GM12878 (cell line): ENCODE measurements at regions of chr13 and their contacts with region 1.

Region 1: DNA sequence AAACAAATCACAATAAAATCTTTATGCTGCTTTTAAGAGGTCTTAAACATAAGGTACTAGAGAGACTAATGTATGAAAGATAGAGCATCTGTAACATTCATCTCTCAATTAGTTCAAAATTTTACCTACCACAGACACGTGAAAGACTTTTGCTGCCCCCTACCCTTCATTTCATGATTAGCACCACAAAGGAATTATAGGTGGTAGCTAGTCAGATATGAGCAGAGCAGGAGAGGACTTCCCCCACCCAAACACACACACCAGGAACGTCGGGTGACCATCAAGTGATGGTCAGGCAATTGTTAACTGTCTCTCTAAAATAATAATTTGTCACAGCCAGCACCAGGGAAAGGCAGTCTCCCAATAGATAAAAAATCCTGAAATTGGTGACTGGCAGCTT is 1531.7 kb upstream of the SPRY2 start:
- DNase-seq: no peak
- ATAC-seq: peak; percentile 85
- H3K4me3 ChIP-seq: no peak overlapping the region
- H3K27ac ChIP-seq: no peak overlapping the region
- H3K4me1 ChIP-seq: no peaks in the 10 kb centered on the region
- H3K27me3 ChIP-seq: no peaks in the 10 kb centered on the region
- CTCF ChIP-seq: peak in 2 of 3 experiments; percentile 29 to 48; a peak in 4 of 6 replicates
- EP300 ChIP-seq: no peak
- POLR2A ChIP-seq: no peak
- RAD21 ChIP-seq: peak; percentile 25; the same call in 1 of the 2 replicates

Region 2: GRCh38 chr13:81487151-81487550 is 385.4 kb before region 1 on chr13:
- CTCF ChIA-PET with region 1: interaction called, 12 read pairs
- POLR2A ChIA-PET with region 1: no interaction called
- RAD21 ChIA-PET with region 1: interaction called, 9 read pairs
- SMC1A ChIA-PET with region 1: interaction called, 9 read pairs
- in situ Hi-C with region 1: no loop called
- intact Hi-C with region 1: no loop called
- DNase-seq: no peak
- ATAC-seq: peak; percentile 60
- H3K4me3 ChIP-seq: no peak overlapping the region
- H3K27ac ChIP-seq: no peak overlapping the region
- H3K4me1 ChIP-seq: no peaks in the 10 kb centered on the region
- H3K27me3 ChIP-seq: no peaks in the 10 kb centered on the region
- CTCF ChIP-seq: peak; percentile 6 to 39 (median 39); a peak in 2 of 6 replicates
- EP300 ChIP-seq: no peak
- POLR2A ChIP-seq: no peak
- RAD21 ChIP-seq: no peak

Region 3: GRCh38 chr13:81639984-81640582 is 232.5 kb before region 1 on chr13:
- CTCF ChIA-PET with region 1: interaction called, 19 read pairs
- POLR2A ChIA-PET with region 1: no interaction called
- RAD21 ChIA-PET with region 1: interaction called, 22 read pairs
- SMC1A ChIA-PET with region 1: interaction called, 6 read pairs
- in situ Hi-C with region 1: no loop called
- intact Hi-C with region 1: loop called (anchors 1 kb)
- DNase-seq: no peak
- ATAC-seq: peak; percentile 58
- H3K4me3 ChIP-seq: no peak overlapping the region
- H3K27ac ChIP-seq: no peak overlapping the region
- H3K4me1 ChIP-seq: no peaks in the 10 kb centered on the region
- H3K27me3 ChIP-seq: no peaks in the 10 kb centered on the region
- CTCF ChIP-seq: peak; percentile 38 to 52 (median 46); a peak in 4 of 6 replicates
- EP300 ChIP-seq: no peak
- POLR2A ChIP-seq: no peak
- RAD21 ChIP-seq: no peak

Region 4: GRCh38 chr13:81697826-81698225 is 174.8 kb before region 1 on chr13:
- CTCF ChIA-PET with region 1: no interaction called
- POLR2A ChIA-PET with region 1: no interaction called
- RAD21 ChIA-PET with region 1: no interaction called
- SMC1A ChIA-PET with region 1: no interaction called
- in situ Hi-C with region 1: no loop called
- intact Hi-C with region 1: no loop called
- DNase-seq: no peak
- ATAC-seq: no peak
- H3K4me3 ChIP-seq: no peak overlapping the region
- H3K27ac ChIP-seq: no peak overlapping the region
- H3K4me1 ChIP-seq: no peaks in the 10 kb centered on the region
- H3K27me3 ChIP-seq: no peaks in the 10 kb centered on the region
- CTCF ChIP-seq: no peak
- EP300 ChIP-seq: no peak
- POLR2A ChIP-seq: no peak
- RAD21 ChIP-seq: no peak

Region 5: GRCh38 chr13:81907787-81908372 is 35.3 kb after region 1 on chr13:
- CTCF ChIA-PET with region 1: no interaction called
- POLR2A ChIA-PET with region 1: no interaction called
- RAD21 ChIA-PET with region 1: no interaction called
- SMC1A ChIA-PET with region 1: no interaction called
- in situ Hi-C with region 1: no loop called
- intact Hi-C with region 1: no loop called
- DNase-seq: no peak
- ATAC-seq: no peak
- H3K4me3 ChIP-seq: no peak overlapping the region
- H3K27ac ChIP-seq: no peak overlapping the region
- H3K4me1 ChIP-seq: no peaks in the 10 kb centered on the region
- H3K27me3 ChIP-seq: no peaks in the 10 kb centered on the region
- CTCF ChIP-seq: no peak
- EP300 ChIP-seq: no peak
- POLR2A ChIP-seq: no peak
- RAD21 ChIP-seq: no peak